ENCODE measurements at regions of chr16 and their contacts with region 1.

Region 1: GRCh38 chr16:3264137-3265036 is 8.0 kb upstream of the MEFV start:
- DNase-seq: peak; percentile 98 to 100 (median 99)

Region 2: DNA sequence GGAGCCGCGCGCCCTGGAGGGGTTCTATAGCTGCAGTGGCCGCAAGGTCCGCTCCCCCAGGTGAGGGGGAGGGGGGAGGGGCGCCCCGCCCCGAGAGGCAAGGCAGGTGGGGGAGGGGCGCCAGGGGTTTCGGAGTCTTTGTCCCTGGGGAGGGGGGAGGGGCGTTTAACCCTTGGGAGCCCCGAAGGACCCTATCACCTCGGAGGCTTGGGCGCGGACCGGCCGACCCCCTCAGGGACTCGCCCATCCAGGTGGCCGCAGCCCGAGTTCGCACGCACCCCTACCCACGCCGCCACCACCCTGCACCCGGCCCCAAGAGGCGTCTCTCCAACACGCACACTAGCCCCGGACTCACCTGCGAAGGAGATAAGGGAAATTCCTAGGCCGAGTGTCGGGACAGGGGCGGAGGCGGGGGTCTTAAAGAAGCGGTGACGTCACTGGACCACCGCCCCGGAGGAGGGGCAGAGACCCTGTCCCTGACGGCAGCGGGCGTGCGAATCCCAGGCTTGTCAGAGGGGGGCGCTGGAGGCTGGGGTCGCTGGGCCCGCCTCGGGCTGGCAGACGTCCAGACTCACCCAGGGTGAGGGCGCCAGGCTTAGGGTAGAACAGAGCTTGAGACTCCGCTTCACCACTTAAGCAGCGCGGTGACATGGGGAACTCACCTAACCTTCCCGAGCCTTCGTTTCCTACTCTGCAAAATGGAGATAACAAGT is 246.4 kb before region 1 on chr16 and contains the start of gene CLDN6:
- intact Hi-C with region 1: no loop called
- DNase-seq: peak in 9 of 42 donors; percentile 19 to 58 (median 44)

Region 3: GRCh38 chr16:3282730-3283524 is 18.5 kb after region 1 on chr16 and contains the start of gene ZNF263:
- intact Hi-C with region 1: loop called (anchors 1 kb)
- DNase-seq: peak; percentile 92 to 99 (median 97)

Region 4: DNA sequence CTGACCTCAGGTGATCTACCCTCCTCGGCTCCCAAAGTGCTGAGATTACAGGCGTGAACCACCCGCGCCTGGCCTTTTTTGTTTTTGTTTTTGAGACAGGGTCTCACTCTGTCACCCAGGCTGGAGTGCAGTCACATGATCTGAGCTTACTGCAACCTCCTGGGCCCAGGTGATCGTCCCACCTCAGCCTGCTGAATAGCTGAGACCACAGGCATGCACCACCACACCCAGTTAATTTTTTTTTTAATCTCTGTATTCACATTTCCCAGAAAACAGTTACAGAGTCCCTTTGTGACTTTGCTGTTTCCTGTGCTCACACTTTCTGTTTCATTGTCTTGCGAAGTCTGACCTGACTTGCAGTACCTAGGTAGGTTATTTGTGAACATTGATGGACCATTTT is 239.1 kb after region 1 on chr16:
- intact Hi-C with region 1: loop called (anchors 2 kb)
- DNase-seq: peak in 2 of 42 donors; percentile 15 to 20

Measured in head of caudate nucleus (tissue), 42 donors.